Activated CD4-positive, alpha-beta memory T cell treated with anti-CD3 and anti-CD28 coated beads, Interleukin-2, amount 10 ng/mL, durations not matched to agents 7 days and 5 days (primary cell): ENCODE measurements at regions of chr2 and their contacts with region 1.

Region 1: DNA sequence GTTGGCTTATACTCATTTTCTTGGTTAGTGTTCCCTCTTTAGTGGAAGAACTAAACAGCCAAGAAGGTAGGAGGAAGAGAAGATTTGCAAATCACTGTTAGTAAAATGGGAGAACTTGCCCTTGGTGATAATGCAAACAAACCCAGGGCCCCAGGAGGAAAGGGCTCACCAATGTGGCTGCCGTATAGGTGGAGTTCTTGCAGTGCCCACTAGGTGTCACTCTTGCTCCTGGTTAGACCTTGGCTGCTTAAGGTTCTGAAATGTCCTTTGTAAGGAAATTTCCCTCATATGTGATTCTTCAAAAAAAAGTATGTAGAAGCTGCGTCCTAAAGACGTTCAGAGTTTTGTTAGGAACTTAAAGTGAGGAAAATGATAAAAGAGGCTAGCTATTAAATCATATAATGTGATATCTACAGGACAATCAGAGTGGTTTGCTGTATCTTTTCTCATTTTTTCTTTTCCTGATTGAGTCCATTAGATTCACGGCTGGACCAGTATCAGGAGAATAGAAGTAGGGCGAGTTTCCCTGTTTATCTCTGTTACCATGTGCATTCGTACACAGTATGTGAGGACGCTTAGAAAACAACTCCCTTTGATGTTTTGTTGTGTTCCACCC is 48.6 kb downstream of the RPIA start:
- DNase-seq: peak; percentile 73
- H3K4me3 Mint-ChIP-seq: no peak overlapping the region
- H3K27ac Mint-ChIP-seq: no peak overlapping the region
- H3K4me1 Mint-ChIP-seq: peaks cover 17% of the 10 kb centered on the region
- H3K27me3 Mint-ChIP-seq: no peaks in the 10 kb centered on the region

Region 2: GRCh38 chr2:88342749-88343148 is 397.3 kb before region 1 on chr2:
- CTCF ChIA-PET with region 1: no interaction called
- POLR2A ChIA-PET with region 1: no interaction called
- DNase-seq: no peak
- H3K4me3 Mint-ChIP-seq: no peak overlapping the region
- H3K27ac Mint-ChIP-seq: peak overlapping the region; percentile 69
- H3K4me1 Mint-ChIP-seq: peaks cover 6% of the 10 kb centered on the region
- H3K27me3 Mint-ChIP-seq: peaks cover 10% of the 10 kb centered on the region

Region 3: DNA sequence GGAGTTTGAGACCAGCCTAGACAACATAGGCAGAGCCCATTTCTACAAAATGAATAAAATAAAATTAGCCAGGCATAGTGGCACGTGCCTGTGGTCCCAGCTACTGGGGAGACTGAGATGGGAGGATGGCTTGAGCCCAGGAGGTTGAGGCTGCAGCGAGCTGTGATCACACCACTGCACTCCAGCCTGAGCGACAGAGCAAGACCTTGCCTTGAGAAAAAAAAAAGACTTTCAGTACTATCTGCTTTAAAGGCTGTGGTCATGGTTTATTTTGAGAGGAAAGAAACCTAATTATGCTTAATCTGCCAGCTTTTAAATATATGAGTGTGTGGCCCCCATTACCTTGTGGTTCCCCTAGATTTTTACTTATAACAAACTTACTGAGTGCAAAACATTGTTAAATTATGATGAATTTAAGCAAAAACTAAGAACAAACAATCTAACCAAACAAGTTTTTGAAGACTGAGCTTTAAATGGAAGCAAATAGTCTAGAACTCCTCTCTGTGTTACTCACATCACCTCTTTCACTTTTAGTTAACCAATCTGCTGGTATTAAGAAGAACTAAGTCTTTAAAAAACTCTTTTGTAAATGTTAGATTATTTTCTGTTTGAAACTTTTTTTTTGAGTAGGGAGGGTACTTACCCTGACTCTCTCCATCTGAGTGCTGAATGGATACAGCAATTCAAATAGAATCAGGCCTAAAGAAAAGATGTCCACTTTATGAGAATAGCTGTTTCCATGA is 178.3 kb before region 1 on chr2:
- CTCF ChIA-PET with region 1: no interaction called
- POLR2A ChIA-PET with region 1: no interaction called
- DNase-seq: no peak
- H3K4me3 Mint-ChIP-seq: no peak overlapping the region
- H3K27ac Mint-ChIP-seq: peak overlapping the region; percentile 44
- H3K4me1 Mint-ChIP-seq: peaks cover 33% of the 10 kb centered on the region
- H3K27me3 Mint-ChIP-seq: no peaks in the 10 kb centered on the region

Region 4: GRCh38 chr2:88729061-88729745 is 10.9 kb before region 1 on chr2:
- CTCF ChIA-PET with region 1: no interaction called
- POLR2A ChIA-PET with region 1: no interaction called
- DNase-seq: no peak
- H3K4me3 Mint-ChIP-seq: no peak overlapping the region
- H3K27ac Mint-ChIP-seq: no peak overlapping the region
- H3K4me1 Mint-ChIP-seq: peaks cover 4% of the 10 kb centered on the region
- H3K27me3 Mint-ChIP-seq: no peaks in the 10 kb centered on the region

Region 5: GRCh38 chr2:88751768-88752167 is 11.7 kb after region 1 on chr2:
- CTCF ChIA-PET with region 1: interaction called, 15 read pairs
- POLR2A ChIA-PET with region 1: no interaction called
- DNase-seq: no peak
- H3K4me3 Mint-ChIP-seq: no peak overlapping the region
- H3K27ac Mint-ChIP-seq: no peak overlapping the region
- H3K4me1 Mint-ChIP-seq: peaks cover 15% of the 10 kb centered on the region
- H3K27me3 Mint-ChIP-seq: no peaks in the 10 kb centered on the region

Region 6: GRCh38 chr2:88810017-88810416 is 69.9 kb after region 1 on chr2:
- CTCF ChIA-PET with region 1: no interaction called
- POLR2A ChIA-PET with region 1: no interaction called
- DNase-seq: no peak
- H3K4me3 Mint-ChIP-seq: no peak overlapping the region
- H3K27ac Mint-ChIP-seq: no peak overlapping the region
- H3K4me1 Mint-ChIP-seq: no peaks in the 10 kb centered on the region
- H3K27me3 Mint-ChIP-seq: peaks cover 10% of the 10 kb centered on the region